Activated CD4-positive, alpha-beta T cell treated with anti-CD3 and anti-CD28 coated beads for 36 hours (primary cell): ENCODE measurements at regions of chr7 and their contacts with region 1.

Region 1: GRCh38 chr7:28298870-28299518 is 113.3 kb upstream of the CREB5 start:
- DNase-seq: peak; percentile 19
- ATAC-seq: no peak
- H3K4me3 Mint-ChIP-seq: no peak overlapping the region
- H3K27ac Mint-ChIP-seq: no peak overlapping the region
- H3K4me1 Mint-ChIP-seq: peaks cover 2% of the 10 kb centered on the region
- H3K27me3 Mint-ChIP-seq: peaks cover 14% of the 10 kb centered on the region

Region 2: DNA sequence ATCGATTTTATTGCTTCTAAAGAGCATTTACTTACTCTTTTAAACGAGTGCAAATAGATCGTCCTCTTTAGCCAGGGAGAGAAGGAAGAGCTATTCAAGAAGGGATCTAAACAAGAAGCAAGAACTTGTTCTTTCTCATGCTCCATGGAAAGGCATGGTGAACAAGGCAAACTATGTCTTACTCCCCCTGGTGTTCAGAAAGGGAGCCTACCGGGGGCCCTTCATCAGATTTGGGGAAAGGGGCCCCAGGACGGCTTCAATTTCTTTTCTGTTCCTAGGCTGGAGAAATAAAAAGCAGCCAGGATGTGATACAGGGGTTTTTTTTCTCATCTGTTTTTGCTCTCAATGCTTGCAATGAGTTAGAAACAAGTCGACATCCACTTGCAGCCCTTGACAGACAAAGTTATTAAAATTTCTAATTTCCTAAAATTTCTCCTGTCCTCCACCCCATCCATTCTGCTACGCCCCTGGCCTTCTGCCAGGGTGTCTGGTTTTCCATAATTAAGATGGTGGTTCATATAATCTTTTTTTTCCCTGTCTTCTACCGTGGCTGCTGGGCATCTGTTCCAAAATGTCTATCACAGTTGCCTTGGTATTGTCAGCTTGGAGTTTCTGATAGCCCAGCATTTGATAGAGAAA is 327.7 kb after region 1 on chr7:
- CTCF ChIA-PET with region 1: no interaction called
- POLR2A ChIA-PET with region 1: no interaction called
- intact Hi-C with region 1: loop called (anchors 1 to 2 kb)
- DNase-seq: peak; percentile 41
- ATAC-seq: no peak
- H3K4me3 Mint-ChIP-seq: no peak overlapping the region
- H3K27ac Mint-ChIP-seq: no peak overlapping the region
- H3K4me1 Mint-ChIP-seq: no peaks in the 10 kb centered on the region
- H3K27me3 Mint-ChIP-seq: peaks cover 10% of the 10 kb centered on the region

Region 3: DNA sequence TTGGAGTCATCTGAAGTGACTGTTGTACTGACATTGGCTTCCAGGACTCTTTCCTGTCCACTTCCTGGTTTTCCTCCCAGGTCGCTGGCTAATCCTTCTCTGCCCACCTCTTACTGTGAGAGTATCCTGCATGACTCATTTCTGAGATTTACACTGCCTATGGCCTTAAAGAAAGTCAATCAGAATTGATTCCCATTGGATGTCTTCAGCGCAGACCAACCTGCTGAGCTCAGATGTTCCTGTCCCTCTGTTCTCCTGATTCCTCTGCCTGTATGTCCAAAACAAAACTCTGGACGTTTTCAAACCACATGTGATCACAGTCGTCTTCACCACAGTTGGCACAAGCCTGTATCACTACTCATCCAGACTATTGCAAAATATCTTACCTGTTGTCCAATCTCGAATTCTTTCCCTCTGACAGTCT is 375.4 kb after region 1 on chr7:
- CTCF ChIA-PET with region 1: no interaction called
- POLR2A ChIA-PET with region 1: no interaction called
- intact Hi-C with region 1: no loop called
- DNase-seq: no peak
- ATAC-seq: no peak
- H3K4me3 Mint-ChIP-seq: no peak overlapping the region
- H3K27ac Mint-ChIP-seq: no peak overlapping the region
- H3K4me1 Mint-ChIP-seq: no peaks in the 10 kb centered on the region
- H3K27me3 Mint-ChIP-seq: no peaks in the 10 kb centered on the region